ENCODE measurements at regions of chr6 and their contacts with region 1.

Region 1: GRCh38 chr6:32952817-32953739 is at the start of gene HLA-DMA:
- DNase-seq: peak; percentile 86
- CTCF ChIP-seq: peak; percentile 56

Region 2: DNA sequence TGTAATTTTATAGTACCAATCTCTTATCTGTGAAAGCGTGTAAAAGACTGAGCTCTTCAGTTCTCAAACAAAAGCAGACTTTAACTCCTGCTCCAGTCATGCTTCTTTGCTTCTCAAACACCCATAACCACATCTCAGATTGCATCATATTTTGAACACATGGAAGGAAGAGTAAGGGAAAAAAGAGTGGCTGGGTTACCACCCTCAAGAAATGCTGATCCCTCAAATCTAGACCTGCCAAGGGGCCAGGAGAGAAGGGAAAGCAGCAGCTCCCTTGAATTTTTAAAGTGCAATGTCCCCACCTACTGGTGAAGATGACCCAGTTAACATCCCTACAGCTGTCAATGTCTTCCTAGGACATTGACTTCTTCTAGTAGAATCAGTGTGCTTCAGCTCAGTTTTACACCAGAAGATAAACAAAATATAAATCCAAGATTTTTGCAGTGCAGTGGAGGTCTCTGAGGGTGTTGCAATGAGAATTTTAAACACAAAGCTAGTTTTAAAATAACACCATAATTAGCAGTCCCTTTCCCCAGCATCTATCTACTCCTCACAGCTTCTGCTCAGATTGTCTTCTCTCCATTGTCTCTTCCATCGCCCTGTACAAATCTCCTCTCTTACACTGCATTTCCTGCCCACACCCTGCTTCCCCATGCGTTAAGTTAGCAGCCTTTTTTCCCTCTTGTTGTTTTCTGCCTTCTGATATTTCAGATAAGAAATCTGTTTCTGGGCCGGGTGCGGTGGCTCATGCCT is 167.1 kb before region 1 on chr6:
- CTCF ChIA-PET with region 1: no interaction called
- POLR2A ChIA-PET with region 1: no interaction called
- DNase-seq: peak; percentile 53
- CTCF ChIP-seq: peak; percentile 66

Region 3: DNA sequence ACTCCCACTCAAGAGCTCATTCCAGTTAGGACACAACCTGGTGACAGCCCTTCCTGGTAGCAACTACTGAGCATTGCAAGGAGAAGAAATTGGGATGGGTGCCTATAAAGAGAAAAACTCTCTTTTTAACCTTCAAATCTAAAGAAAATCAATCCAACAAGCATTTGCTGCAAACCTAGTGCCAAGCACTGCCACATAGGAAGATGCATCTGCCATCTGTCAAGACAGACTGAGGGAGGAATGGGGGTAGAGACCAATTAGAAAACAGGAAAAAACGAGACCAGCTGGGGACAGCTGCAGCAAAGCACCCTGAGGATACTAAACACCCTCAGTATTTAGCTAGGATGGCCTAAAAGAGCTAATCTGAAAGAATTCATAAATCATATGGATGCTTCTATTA is 40.1 kb before region 1 on chr6:
- CTCF ChIA-PET with region 1: interaction called, 15 read pairs
- POLR2A ChIA-PET with region 1: no interaction called
- DNase-seq: no peak
- CTCF ChIP-seq: no peak

Region 4: DNA sequence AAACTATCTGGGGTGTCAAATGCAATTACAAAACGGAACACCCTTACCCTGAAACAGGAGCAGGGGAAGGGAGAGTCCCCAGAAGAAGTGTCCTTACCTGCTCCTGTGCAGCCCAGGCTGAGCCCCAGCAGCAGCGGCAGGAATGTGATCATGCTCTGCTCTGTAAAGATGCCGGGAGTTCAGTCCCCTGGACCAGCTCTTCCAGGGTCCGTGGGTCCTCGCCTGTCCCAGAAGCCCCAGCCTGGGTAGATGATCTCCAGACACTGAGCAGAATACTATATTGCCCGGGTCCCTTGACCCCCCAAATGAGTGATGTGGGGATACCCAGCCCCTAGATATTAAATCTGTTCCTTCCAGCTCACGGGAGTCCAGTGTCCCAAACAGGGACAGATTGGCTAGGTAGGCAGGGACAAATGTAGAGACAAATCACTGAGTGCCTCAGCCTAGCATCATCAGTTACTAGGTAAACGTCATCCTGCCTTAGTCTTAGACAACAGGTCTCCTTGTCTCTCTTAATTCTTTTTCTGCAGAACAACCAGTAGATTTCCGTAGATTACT is 12.3 kb before region 1 on chr6 and contains the start of gene HLA-DMB:
- CTCF ChIA-PET with region 1: interaction called, 379 read pairs
- POLR2A ChIA-PET with region 1: interaction called, 11 read pairs
- DNase-seq: peak; percentile 87
- CTCF ChIP-seq: no peak

Measured in GM10248 (cell line).